ENCODE measurements at regions of chr7 and their contacts with region 1.

Region 1: DNA sequence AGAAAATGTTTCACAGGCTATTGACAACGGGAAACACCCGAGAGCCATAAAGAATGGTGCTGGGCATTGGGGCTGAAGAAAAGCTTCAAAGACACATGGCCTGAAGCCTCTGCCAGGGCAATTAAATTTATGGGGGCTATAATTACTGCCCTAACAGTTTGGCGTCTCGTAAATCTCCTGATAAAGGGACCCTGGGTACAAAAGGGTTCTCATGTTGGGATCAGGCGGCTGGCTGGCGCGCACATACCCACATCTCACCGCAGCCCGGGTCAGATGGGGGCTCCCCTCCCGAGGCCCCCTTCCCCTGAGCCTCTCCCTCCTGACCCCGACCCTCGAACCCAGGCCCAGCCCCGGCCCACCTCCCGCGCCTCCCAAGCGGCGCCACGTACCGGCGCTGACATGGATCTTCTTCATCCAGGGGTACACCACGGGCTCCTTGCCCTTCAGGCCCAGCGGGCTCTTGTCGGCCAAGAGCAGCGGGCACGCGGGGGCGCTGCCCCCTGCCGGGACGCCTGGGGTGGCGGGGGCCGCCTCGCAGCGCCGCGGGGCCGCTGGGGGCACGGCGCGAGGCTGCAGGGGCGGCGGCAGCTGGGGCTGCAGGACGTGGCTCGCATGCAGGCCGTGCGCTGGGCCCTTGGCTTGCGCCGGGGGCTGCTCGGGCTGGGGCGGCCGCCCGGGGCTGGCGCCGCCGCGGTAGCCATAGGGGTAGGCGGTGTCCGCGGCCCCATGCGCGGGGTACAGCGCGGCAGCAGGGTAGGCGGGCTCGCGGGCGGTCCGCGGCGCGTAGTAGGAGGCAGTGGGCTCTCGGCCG is 623 bp downstream of the HOXA4 start:
- DNase-seq: peak; percentile 28

Region 2: GRCh38 chr7:26864309-26865093 is 265.4 kb before region 1 on chr7 and contains the start of gene SKAP2:
- in situ Hi-C with region 1: no loop called
- DNase-seq: peak; percentile 100
- total RNA-seq, gene SKAP2: 43.8 and 49.3 TPM in 2 replicates

Region 3: GRCh38 chr7:27160546-27161213 is 30.7 kb after region 1 on chr7:
- in situ Hi-C with region 1: loop called (anchors 5 kb)
- DNase-seq: peak; percentile 84

Measured in Caki2 (cell line).